H1 (cell line): ENCODE measurements at regions of chr9 and their contacts with region 1.

Region 1: GRCh38 chr9:113221003-113221799 is at the starts of genes FKBP15 and SLC31A1:
- DNase-seq: peak; percentile 95 to 98
- H3K4me3 ChIP-seq: peak within 1 kb of the TSS; percentile 93 to 96 (median 94)
- H3K27ac ChIP-seq: peak within 1 kb of the TSS; percentile 71; the same call in 1 of the 2 replicates
- H3K4me1 ChIP-seq: peaks cover 0 to 10% (median 1%) of the 10 kb centered on the region in 4 experiments; a peak in 4 of 7 replicates
- H3K27me3 ChIP-seq: no peaks in the 10 kb centered on the region
- CTCF ChIP-seq: no peak
- EP300 ChIP-seq: no peak
- POLR2A ChIP-seq: peak; percentile 46 to 83
- RAD21 ChIP-seq: no peak
- total RNA-seq, gene FKBP15: 13.8 and 13.9 TPM in 2 replicates
- total RNA-seq, gene SLC31A1: 40.7 and 40.8 TPM in 2 replicates

Region 2: GRCh38 chr9:113150670-113151611 is 70.3 kb before region 1 on chr9 and contains the start of gene SLC31A2:
- CTCF ChIA-PET with region 1: interaction called, 17 read pairs
- POLR2A ChIA-PET with region 1: no interaction called
- DNase-seq: peak; percentile 51 to 91
- H3K4me3 ChIP-seq: peak within 1 kb of the TSS; percentile 66 to 82 (median 72)
- H3K27ac ChIP-seq: no peak within 1 kb of the TSS
- H3K4me1 ChIP-seq: no peaks in the 10 kb centered on the region; a peak in 1 of 7 replicates
- H3K27me3 ChIP-seq: peaks cover 0 to 10% (median 7%) of the 10 kb centered on the region in 4 experiments; a peak in 5 of 7 replicates
- CTCF ChIP-seq: peak; percentile 25 to 35 (median 29); a peak in 3 of 4 replicates
- EP300 ChIP-seq: peak in 1 of 2 experiments; percentile 55; a peak in 1 of 3 replicates
- POLR2A ChIP-seq: no peak
- RAD21 ChIP-seq: peak in 1 of 2 experiments; percentile 20; a peak in 1 of 4 replicates
- total RNA-seq, gene SLC31A2: 1.5 and 2.0 TPM in 2 replicates

Region 3: GRCh38 chr9:113231701-113232100 is 10.5 kb after region 1 on chr9:
- CTCF ChIA-PET with region 1: interaction called, 3 read pairs
- POLR2A ChIA-PET with region 1: interaction called, 10 read pairs
- DNase-seq: no peak
- H3K4me3 ChIP-seq: no peak overlapping the region
- H3K27ac ChIP-seq: no peak overlapping the region
- H3K4me1 ChIP-seq: no peaks in the 10 kb centered on the region
- H3K27me3 ChIP-seq: no peaks in the 10 kb centered on the region
- CTCF ChIP-seq: no peak
- EP300 ChIP-seq: no peak
- POLR2A ChIP-seq: no peak
- RAD21 ChIP-seq: no peak

Region 4: GRCh38 chr9:113446323-113446740 is 225.1 kb after region 1 on chr9:
- CTCF ChIA-PET with region 1: no interaction called
- POLR2A ChIA-PET with region 1: no interaction called
- DNase-seq: no peak
- H3K4me3 ChIP-seq: no peak overlapping the region
- H3K27ac ChIP-seq: no peak overlapping the region
- H3K4me1 ChIP-seq: no peaks in the 10 kb centered on the region
- H3K27me3 ChIP-seq: no peaks in the 10 kb centered on the region
- CTCF ChIP-seq: peak in 2 of 3 experiments; percentile 47; a peak in 2 of 4 replicates
- EP300 ChIP-seq: no peak
- POLR2A ChIP-seq: no peak
- RAD21 ChIP-seq: peak; percentile 86 to 88